Heart right ventricle (tissue), 16 donors: ENCODE measurements at regions of chr1 and their contacts with region 1.

Region 1: GRCh38 chr1:243254927-243255790 is at the start of gene CEP170:
- DNase-seq: peak; percentile 92 to 96
- ATAC-seq: peak; percentile 75 to 92 (median 82)
- H3K4me3 ChIP-seq: peak within 1 kb of the TSS; percentile 69 to 95 (median 86)
- H3K27ac ChIP-seq: peak within 1 kb of the TSS; percentile 87 to 99 (median 97)
- H3K4me1 ChIP-seq: peaks cover 0 to 61% (median 49%) of the 10 kb centered on the region in 9 donors
- H3K27me3 ChIP-seq: no peaks in the 10 kb centered on the region
- CTCF ChIP-seq: no peak
- total RNA-seq, gene CEP170: 37.2 to 75.5 (median 56.0) TPM

Region 2: GRCh38 chr1:243216741-243217140 is 38.4 kb before region 1 on chr1:
- intact Hi-C with region 1: loop called in 1 of 10 experiments (anchors 5 kb)
- DNase-seq: no peak
- ATAC-seq: no peak
- H3K4me3 ChIP-seq: no peak overlapping the region
- H3K27ac ChIP-seq: no peak overlapping the region
- H3K4me1 ChIP-seq: peaks cover 0 to 42% (median 12%) of the 10 kb centered on the region in 9 donors
- H3K27me3 ChIP-seq: no peaks in the 10 kb centered on the region
- CTCF ChIP-seq: no peak

Region 3: DNA sequence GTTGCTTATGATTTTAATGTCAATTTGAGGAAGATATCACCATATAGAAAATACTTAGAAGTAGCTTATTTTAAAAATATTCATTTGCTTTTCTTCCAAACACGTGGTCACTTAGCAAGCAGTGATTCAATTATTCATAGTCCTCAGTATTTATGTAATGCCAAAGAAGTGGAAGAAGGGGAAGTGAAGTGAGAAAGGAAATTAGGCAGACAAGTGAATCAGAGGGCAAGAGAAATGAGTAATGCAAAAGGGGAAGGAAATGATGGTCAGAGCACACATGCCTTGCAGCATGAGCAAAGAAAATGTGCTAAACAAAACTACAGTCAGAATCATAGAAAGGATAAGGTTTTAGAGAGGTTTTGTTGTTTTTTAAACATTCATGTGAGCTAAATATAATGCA is 32.5 kb after region 1 on chr1:
- intact Hi-C with region 1: no loop called
- DNase-seq: no peak
- ATAC-seq: peak in 7 of 8 donors; percentile 64 to 91 (median 82)
- H3K4me3 ChIP-seq: no peak overlapping the region
- H3K27ac ChIP-seq: peak overlapping the region in 6 of 10 donors; percentile 32 to 92 (median 58)
- H3K4me1 ChIP-seq: peaks cover 0 to 53% (median 8%) of the 10 kb centered on the region in 9 donors
- H3K27me3 ChIP-seq: no peaks in the 10 kb centered on the region
- CTCF ChIP-seq: no peak